ENCODE measurements at regions of chr15 and their contacts with region 1.

Region 1: DNA sequence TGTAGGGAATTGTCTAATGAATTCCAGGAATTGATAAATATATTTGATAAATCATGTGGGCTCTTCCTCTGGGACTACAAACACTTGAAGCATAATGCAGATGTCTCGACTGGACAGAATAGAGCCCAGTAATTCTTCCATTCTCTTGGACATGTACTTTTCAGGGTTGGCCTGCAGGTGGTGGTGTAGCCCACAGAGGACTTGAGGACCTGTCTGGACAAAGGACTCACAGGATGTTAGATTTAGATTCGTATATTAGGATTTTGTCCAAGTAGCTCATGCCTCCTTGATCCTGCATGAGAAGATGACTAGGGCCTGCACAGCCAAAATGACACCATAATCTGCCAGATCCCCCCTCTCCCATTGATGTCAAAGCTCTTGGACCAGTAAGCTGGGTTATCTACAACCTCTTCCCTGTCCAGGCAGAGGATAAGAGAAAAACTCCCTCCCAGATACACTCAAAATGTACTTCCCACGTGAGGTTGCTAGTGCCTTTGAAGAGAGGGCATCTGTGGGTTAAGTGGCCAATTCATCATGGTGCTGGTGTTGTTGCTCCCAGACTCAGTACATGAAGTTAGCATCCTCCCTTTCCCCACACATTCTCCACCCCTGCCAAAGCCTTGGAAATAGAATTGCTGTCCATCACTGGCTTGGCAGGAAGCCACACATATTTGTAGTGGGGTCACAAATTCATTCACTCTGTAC is 88.6 kb upstream of the ZNF280D start:
- DNase-seq: peak; percentile 26
- H3K4me3 ChIP-seq: no peak overlapping the region
- CTCF ChIP-seq: peak; percentile 70

Region 2: GRCh38 chr15:56832125-56832524 is 10.3 kb after region 1 on chr15:
- CTCF ChIA-PET with region 1: interaction called, 24 read pairs
- POLR2A ChIA-PET with region 1: no interaction called
- DNase-seq: no peak
- H3K4me3 ChIP-seq: no peak overlapping the region; the same call in 1 of the 2 replicates
- CTCF ChIP-seq: no peak

Region 3: DNA sequence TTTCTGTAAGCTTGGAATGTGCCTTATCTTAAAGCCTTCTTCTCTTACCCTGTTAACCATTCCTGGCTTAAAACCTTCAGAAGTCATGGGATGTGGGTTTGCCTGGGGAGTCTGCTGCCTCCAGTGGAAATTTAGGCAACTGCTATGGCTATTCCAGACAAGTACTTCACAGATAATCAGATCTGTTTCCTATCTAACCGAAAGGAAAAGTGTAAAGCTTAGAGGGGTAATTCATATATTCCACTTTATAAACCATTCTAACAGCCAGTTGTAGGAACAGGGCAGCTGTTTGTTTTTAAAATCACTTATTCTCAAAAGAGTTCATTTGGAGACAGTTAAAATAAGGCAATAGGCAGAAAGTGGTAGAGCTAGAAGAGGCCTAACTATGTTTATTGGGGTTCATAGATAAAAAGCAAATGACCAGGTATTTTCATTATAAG is 316.5 kb after region 1 on chr15:
- CTCF ChIA-PET with region 1: interaction called, 19 read pairs
- POLR2A ChIA-PET with region 1: no interaction called
- DNase-seq: no peak
- H3K4me3 ChIP-seq: no peak overlapping the region
- CTCF ChIP-seq: peak; percentile 68